MCF 10A (cell line): ENCODE measurements at regions of chr1 and their contacts with region 1.

Region 1: GRCh38 chr1:243255791-243256512 is at the start of gene SDCCAG8:
- DNase-seq: peak; percentile 100
- H3K4me3 Mint-ChIP-seq: peak within 1 kb of the TSS; percentile 84
- H3K27ac Mint-ChIP-seq: peak within 1 kb of the TSS; percentile 97
- H3K4me1 Mint-ChIP-seq: peaks cover 24% of the 10 kb centered on the region
- H3K27me3 Mint-ChIP-seq: no peaks in the 10 kb centered on the region
- CTCF ChIP-seq: no peak
- total RNA-seq, gene SDCCAG8: 81.1 and 128 TPM in 2 replicates

Region 2: GRCh38 chr1:241519308-241520079 is 1736.5 kb before region 1 on chr1 and contains the start of gene FH:
- CTCF ChIA-PET with region 1: no interaction called
- POLR2A ChIA-PET with region 1: interaction called, 18 read pairs
- intact Hi-C with region 1: no loop called
- DNase-seq: peak; percentile 100
- H3K4me3 Mint-ChIP-seq: no peak within 1 kb of the TSS
- H3K27ac Mint-ChIP-seq: peak within 1 kb of the TSS; percentile 67
- H3K4me1 Mint-ChIP-seq: peaks cover 19% of the 10 kb centered on the region
- H3K27me3 Mint-ChIP-seq: peaks cover 13% of the 10 kb centered on the region
- CTCF ChIP-seq: no peak
- total RNA-seq, gene FH: 136 and 215 TPM in 2 replicates

Region 3: DNA sequence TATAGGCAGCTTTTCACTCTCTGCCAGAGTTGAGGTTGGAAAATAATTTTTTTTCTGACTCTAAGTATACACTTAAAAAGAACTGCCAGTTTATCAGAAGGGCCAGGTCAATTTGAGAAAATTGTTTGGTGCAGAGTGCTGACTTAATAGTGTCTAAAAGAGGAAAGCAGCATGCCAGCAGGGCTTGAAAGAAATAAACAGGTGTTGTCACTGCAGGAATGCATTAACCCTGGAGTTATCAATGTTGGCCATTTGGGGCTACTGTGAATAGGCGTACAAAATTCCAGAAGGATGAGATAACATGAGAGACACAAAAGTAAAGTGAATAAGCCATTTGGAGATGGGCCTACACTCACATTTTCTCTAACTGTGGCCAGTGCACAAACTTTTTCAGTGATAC is 510.9 kb before region 1 on chr1:
- CTCF ChIA-PET with region 1: no interaction called
- POLR2A ChIA-PET with region 1: no interaction called
- intact Hi-C with region 1: no loop called
- DNase-seq: no peak
- H3K4me3 Mint-ChIP-seq: no peak overlapping the region
- H3K27ac Mint-ChIP-seq: no peak overlapping the region
- H3K4me1 Mint-ChIP-seq: no peaks in the 10 kb centered on the region
- H3K27me3 Mint-ChIP-seq: no peaks in the 10 kb centered on the region
- CTCF ChIP-seq: no peak

Region 4: GRCh38 chr1:243213045-243213787 is 42.7 kb before region 1 on chr1:
- CTCF ChIA-PET with region 1: interaction called, 3 read pairs
- POLR2A ChIA-PET with region 1: interaction called, 40 read pairs
- intact Hi-C with region 1: loop called (anchors 2 kb)
- DNase-seq: peak; percentile 81
- H3K4me3 Mint-ChIP-seq: peak overlapping the region; percentile 54
- H3K27ac Mint-ChIP-seq: peak overlapping the region; percentile 89
- H3K4me1 Mint-ChIP-seq: peaks cover 20% of the 10 kb centered on the region
- H3K27me3 Mint-ChIP-seq: no peaks in the 10 kb centered on the region
- CTCF ChIP-seq: no peak

Region 5: GRCh38 chr1:243236604-243237252 is 19.2 kb before region 1 on chr1:
- CTCF ChIA-PET with region 1: interaction called, 10 read pairs
- POLR2A ChIA-PET with region 1: interaction called, 208 read pairs
- intact Hi-C with region 1: no loop called
- DNase-seq: no peak
- H3K4me3 Mint-ChIP-seq: no peak overlapping the region
- H3K27ac Mint-ChIP-seq: no peak overlapping the region
- H3K4me1 Mint-ChIP-seq: peaks cover 24% of the 10 kb centered on the region
- H3K27me3 Mint-ChIP-seq: no peaks in the 10 kb centered on the region
- CTCF ChIP-seq: no peak

Region 6: DNA sequence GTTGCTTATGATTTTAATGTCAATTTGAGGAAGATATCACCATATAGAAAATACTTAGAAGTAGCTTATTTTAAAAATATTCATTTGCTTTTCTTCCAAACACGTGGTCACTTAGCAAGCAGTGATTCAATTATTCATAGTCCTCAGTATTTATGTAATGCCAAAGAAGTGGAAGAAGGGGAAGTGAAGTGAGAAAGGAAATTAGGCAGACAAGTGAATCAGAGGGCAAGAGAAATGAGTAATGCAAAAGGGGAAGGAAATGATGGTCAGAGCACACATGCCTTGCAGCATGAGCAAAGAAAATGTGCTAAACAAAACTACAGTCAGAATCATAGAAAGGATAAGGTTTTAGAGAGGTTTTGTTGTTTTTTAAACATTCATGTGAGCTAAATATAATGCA is 31.7 kb after region 1 on chr1:
- CTCF ChIA-PET with region 1: no interaction called
- POLR2A ChIA-PET with region 1: interaction called, 84 read pairs
- intact Hi-C with region 1: loop called (anchors 2 kb)
- DNase-seq: peak; percentile 90
- H3K4me3 Mint-ChIP-seq: no peak overlapping the region
- H3K27ac Mint-ChIP-seq: peak overlapping the region; percentile 29
- H3K4me1 Mint-ChIP-seq: peaks cover 13% of the 10 kb centered on the region
- H3K27me3 Mint-ChIP-seq: no peaks in the 10 kb centered on the region
- CTCF ChIP-seq: no peak

Region 7: GRCh38 chr1:243312952-243313634 is 57.1 kb after region 1 on chr1:
- CTCF ChIA-PET with region 1: interaction called, 3 read pairs
- POLR2A ChIA-PET with region 1: interaction called, 29 read pairs
- intact Hi-C with region 1: no loop called
- DNase-seq: no peak
- H3K4me3 Mint-ChIP-seq: no peak overlapping the region
- H3K27ac Mint-ChIP-seq: no peak overlapping the region
- H3K4me1 Mint-ChIP-seq: peaks cover 14% of the 10 kb centered on the region
- H3K27me3 Mint-ChIP-seq: no peaks in the 10 kb centered on the region
- CTCF ChIP-seq: no peak

Region 8: GRCh38 chr1:244835276-244836134 is 1579.6 kb after region 1 on chr1 and contains the start of gene COX20:
- CTCF ChIA-PET with region 1: no interaction called
- POLR2A ChIA-PET with region 1: interaction called, 15 read pairs
- intact Hi-C with region 1: no loop called
- DNase-seq: peak; percentile 98
- H3K4me3 Mint-ChIP-seq: peak within 1 kb of the TSS; percentile 81
- H3K27ac Mint-ChIP-seq: peak within 1 kb of the TSS; percentile 99
- H3K4me1 Mint-ChIP-seq: peaks cover 33% of the 10 kb centered on the region
- H3K27me3 Mint-ChIP-seq: no peaks in the 10 kb centered on the region
- CTCF ChIP-seq: no peak
- total RNA-seq, gene COX20: 44.6 and 46.1 TPM in 2 replicates